ENCODE measurements at regions of chr18 and their contacts with region 1.

Region 1: DNA sequence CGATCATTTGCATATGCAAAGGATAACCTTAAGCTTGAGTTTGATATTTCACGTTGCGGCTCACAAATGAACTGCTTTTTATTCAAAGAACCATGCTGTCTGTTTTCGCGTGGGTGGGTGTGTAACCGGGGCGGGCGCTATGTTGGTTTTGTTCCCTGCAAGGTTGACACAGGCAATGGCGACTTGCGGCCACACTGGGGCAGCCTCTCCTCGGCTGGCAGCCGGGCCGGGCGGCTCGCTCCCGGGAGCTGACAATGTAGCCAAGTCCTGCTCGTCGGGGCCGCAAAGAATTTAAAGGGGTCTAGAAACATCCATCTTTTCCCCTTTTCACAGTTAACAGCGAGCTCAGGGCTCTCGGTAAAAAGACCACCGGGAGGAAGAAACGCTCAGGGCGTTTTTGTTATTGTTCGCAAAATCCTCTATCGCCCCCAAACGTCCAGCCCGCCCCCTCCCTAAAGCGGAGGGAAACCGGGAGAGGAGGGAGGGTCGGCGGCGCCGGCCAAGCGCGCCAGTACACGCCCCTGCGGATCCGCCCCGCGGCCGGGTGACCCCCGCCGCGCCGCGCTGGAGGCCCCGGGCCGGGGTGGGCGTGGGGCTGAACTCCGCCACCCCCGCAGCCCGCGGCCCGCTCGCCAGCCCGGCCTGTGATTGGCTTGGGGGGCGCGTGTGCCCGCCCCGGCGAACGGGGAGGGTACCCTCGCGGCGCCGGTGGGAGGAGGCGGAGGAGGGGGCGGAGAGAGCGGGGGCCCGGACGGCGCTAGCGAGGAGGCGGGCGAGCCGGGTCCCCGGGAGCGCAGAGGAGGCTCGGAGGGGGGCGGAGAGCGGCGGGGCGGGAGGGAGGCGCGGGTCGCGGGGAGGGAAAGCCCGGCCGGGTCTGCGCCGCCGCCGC is at the start of gene NEDD4L:
- DNase-seq: peak; percentile 88 to 94 (median 93)
- H3K4me3 ChIP-seq: peak within 1 kb of the TSS; percentile 70 to 96 (median 85)
- H3K27ac ChIP-seq: peak within 1 kb of the TSS in 1 of 2 experiments; percentile 74
- H3K4me1 ChIP-seq: peaks cover 2 to 25% (median 21%) of the 10 kb centered on the region in 4 experiments
- H3K27me3 ChIP-seq: no peaks in the 10 kb centered on the region

Region 2: DNA sequence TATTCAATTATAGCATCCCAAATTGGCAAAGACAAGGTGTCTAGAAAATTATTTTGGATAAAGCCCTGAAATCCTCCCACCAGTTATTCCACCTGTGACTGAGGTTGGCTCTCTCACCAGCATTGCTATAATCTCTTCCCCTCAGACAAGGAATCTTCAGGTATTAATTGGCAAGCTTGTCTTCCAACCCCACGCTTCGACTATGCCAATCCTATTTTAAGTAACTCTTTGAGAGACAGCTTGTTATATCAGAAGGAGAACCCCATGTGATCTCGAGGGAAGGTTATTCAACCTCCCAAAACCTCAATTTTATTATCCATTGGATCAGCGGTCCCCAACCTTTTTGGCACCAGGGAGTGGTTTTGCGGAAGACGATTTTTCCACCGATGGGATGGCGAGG is 54.2 kb before region 1 on chr18:
- CTCF ChIA-PET with region 1: no interaction called
- POLR2A ChIA-PET with region 1: no interaction called
- DNase-seq: no peak
- H3K4me3 ChIP-seq: no peak overlapping the region
- H3K27ac ChIP-seq: no peak overlapping the region
- H3K4me1 ChIP-seq: no peaks in the 10 kb centered on the region
- H3K27me3 ChIP-seq: no peaks in the 10 kb centered on the region

Region 3: GRCh38 chr18:58032233-58032632 is 11.5 kb before region 1 on chr18:
- CTCF ChIA-PET with region 1: no interaction called
- POLR2A ChIA-PET with region 1: no interaction called
- DNase-seq: no peak
- H3K4me3 ChIP-seq: no peak overlapping the region
- H3K27ac ChIP-seq: no peak overlapping the region
- H3K4me1 ChIP-seq: no peaks in the 10 kb centered on the region
- H3K27me3 ChIP-seq: peaks cover 0 to 7% (median 4%) of the 10 kb centered on the region in 5 experiments

Region 4: GRCh38 chr18:58125183-58125582 is 81.4 kb after region 1 on chr18:
- CTCF ChIA-PET with region 1: interaction called, 27 read pairs
- POLR2A ChIA-PET with region 1: interaction called, 3 read pairs
- DNase-seq: no peak
- H3K4me3 ChIP-seq: no peak overlapping the region
- H3K27ac ChIP-seq: no peak overlapping the region
- H3K4me1 ChIP-seq: no peaks in the 10 kb centered on the region
- H3K27me3 ChIP-seq: no peaks in the 10 kb centered on the region

Region 5: DNA sequence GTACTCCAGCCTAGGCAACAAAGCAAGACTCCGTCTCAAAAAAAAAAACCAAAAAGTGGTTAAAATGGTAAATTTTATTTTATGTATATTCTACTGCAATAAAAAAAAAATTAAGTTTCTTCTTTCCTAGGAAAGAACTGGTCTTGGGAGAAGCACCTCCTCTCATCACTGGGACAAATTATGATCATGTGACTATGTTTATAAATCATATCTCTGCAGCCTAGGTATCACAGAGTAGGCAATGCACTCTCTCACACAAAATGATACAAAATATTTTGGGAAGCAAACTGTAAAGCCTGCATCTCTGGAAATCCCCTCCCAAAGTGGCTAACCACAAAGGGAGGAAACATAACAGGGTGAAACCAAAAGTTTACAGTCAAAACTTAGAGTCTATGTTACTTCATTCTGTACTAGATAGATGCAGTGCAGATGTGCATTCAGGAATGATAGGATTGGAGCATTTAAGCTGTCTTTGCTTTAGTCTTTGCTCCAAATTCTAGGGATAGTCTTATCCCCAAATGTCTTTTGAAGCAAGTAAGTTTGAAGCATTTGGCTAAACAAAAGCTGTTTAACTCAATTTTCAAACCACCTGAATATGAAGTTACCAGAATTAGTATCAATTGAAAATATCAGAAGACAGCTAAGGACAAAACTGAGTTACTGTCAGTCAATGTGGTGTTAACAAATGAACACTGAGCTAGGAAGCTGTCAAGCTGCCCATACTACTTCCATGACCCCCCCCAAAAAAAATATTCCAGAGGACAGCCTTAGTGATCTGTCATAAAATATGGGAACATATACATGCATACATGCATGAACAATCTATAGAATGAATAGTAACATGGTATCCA is 606.5 kb after region 1 on chr18:
- CTCF ChIA-PET with region 1: no interaction called
- POLR2A ChIA-PET with region 1: no interaction called
- DNase-seq: peak; percentile 50 to 86 (median 86)
- H3K4me3 ChIP-seq: no peak overlapping the region
- H3K27ac ChIP-seq: no peak overlapping the region
- H3K4me1 ChIP-seq: peaks cover 5 to 18% (median 9%) of the 10 kb centered on the region in 4 experiments
- H3K27me3 ChIP-seq: no peaks in the 10 kb centered on the region